PC-3 (cell line): ENCODE measurements at regions of chr4 and their contacts with region 1.

Region 1: GRCh38 chr4:31411565-31411964 is 691.4 kb downstream of the PCDH7 start:
- DNase-seq: peak; percentile 42
- ATAC-seq: peak; percentile 86
- H3K4me3 ChIP-seq: no peak overlapping the region
- H3K27ac ChIP-seq: peak overlapping the region; percentile 21; the same call in 1 of the 2 replicates
- H3K4me1 ChIP-seq: no peaks in the 10 kb centered on the region
- H3K27me3 ChIP-seq: no peaks in the 10 kb centered on the region
- CTCF ChIP-seq: no peak

Region 2: DNA sequence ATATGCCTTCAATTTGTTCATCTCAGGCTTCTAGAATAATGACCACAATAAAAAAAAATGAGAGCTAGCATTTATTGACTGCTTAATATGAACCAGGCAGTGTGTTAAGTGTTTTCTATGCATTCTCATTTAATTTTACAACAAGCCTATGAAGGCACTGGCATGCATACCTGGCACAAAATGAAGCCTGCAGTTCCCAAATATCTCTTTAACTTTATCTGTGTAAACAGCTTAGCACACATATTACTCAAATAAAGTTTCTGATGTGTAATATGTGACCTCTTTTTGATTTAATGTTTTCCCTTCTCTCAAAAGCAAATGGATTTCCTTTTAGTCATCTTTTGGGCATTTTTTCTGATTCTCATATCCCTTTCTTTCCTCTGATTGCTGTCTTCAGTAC is 19.6 kb before region 1 on chr4:
- CTCF ChIA-PET with region 1: no interaction called
- POLR2A ChIA-PET with region 1: no interaction called
- intact Hi-C with region 1: loop called (anchors 1 kb)
- DNase-seq: peak; percentile 64
- ATAC-seq: peak; percentile 97
- H3K4me3 ChIP-seq: no peak overlapping the region
- H3K27ac ChIP-seq: no peak overlapping the region
- H3K4me1 ChIP-seq: peaks cover 13% of the 10 kb centered on the region; the same call in 1 of the 2 replicates
- H3K27me3 ChIP-seq: no peaks in the 10 kb centered on the region
- CTCF ChIP-seq: no peak

Region 3: DNA sequence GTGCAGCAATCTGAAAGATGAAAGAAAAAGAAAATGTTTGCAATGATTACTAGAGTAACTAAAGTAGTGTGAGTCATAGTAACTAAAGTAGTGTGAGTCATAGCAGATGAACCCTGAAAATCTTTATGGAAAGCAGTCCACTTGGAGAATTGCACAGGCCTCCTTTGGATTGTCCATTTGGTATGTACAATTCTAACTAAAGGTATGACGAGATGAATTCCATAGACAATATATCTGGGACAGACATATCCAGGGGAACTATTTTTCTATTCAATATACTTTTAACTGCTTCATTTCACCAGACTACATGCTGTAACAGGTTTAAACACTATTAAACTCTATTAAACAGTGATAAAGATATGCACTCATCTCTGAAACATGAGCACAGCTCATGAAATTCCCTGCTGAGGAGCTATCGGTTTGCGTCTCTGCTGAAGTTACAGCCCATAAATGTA is 107.3 kb after region 1 on chr4:
- CTCF ChIA-PET with region 1: no interaction called
- POLR2A ChIA-PET with region 1: no interaction called
- intact Hi-C with region 1: loop called (anchors 10 kb)
- DNase-seq: peak; percentile 80
- ATAC-seq: peak; percentile 91
- H3K4me3 ChIP-seq: peak overlapping the region; percentile 24; the same call in 1 of the 2 replicates
- H3K27ac ChIP-seq: peak overlapping the region; percentile 63
- H3K4me1 ChIP-seq: peaks cover 12% of the 10 kb centered on the region
- H3K27me3 ChIP-seq: no peaks in the 10 kb centered on the region
- CTCF ChIP-seq: no peak